Calu3 (cell line): ENCODE measurements at regions of chr11 and their contacts with region 1.

Region 1: DNA sequence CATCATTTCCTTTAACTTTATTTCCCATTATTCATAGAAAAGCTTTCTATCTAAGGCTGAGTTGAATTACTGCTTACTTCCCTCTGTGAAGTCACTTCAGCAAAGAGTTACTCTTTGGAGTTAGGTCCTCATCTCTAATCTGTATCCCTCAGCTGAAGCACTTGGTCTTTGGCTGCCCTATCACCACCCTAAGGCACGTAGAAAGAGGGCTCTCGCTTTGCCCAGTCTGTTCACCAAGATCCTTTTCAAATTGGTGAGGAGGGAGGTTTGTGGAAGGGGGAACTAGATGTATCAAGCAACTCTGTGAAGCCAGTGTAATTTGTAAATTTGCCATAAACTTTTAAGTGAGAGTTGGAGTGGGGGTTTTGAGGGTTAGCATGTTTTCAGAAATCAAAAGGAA is 43.4 kb downstream of the PAX6 start:
- DNase-seq: no peak
- H3K4me3 Mint-ChIP-seq: no peak overlapping the region
- H3K27ac Mint-ChIP-seq: no peak overlapping the region
- H3K4me1 Mint-ChIP-seq: no peaks in the 10 kb centered on the region
- H3K27me3 Mint-ChIP-seq: no peaks in the 10 kb centered on the region
- CTCF ChIP-seq: no peak

Region 2: GRCh38 chr11:31464436-31464835 is 303.2 kb before region 1 on chr11:
- CTCF ChIA-PET with region 1: no interaction called
- intact Hi-C with region 1: no loop called
- DNase-seq: no peak
- H3K4me3 Mint-ChIP-seq: no peak overlapping the region
- H3K27ac Mint-ChIP-seq: no peak overlapping the region
- H3K4me1 Mint-ChIP-seq: no peaks in the 10 kb centered on the region
- H3K27me3 Mint-ChIP-seq: no peaks in the 10 kb centered on the region
- CTCF ChIP-seq: no peak

Region 3: DNA sequence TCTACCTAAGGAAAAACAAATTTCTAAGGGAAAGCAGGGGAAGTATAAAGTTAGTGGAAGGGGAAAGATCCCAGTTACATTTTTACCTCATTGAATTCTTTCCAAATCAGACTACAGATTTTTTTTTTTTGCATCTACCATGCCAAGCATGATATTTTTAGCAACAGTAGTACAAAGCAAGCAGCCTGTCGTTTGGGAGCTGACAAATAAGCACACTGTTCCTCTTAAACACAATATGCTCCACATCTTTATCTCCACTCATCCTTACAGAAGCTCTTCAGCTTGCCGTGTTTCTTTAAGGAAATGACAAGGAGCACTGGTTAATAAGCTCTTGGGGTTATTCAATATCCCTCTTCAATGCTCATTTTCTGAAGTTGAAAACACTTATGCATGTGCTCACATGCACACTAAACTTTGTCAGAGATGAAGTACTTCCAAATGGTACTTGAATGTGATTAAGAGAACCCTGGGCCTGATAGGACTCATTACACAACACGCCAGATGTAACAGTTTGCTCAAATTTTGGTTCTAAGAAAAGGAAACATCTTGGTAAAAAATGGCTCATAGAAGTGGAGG is 10.3 kb before region 1 on chr11:
- CTCF ChIA-PET with region 1: interaction called, 10 read pairs
- intact Hi-C with region 1: no loop called
- DNase-seq: no peak
- H3K4me3 Mint-ChIP-seq: no peak overlapping the region
- H3K27ac Mint-ChIP-seq: no peak overlapping the region
- H3K4me1 Mint-ChIP-seq: no peaks in the 10 kb centered on the region
- H3K27me3 Mint-ChIP-seq: no peaks in the 10 kb centered on the region
- CTCF ChIP-seq: no peak

Region 4: DNA sequence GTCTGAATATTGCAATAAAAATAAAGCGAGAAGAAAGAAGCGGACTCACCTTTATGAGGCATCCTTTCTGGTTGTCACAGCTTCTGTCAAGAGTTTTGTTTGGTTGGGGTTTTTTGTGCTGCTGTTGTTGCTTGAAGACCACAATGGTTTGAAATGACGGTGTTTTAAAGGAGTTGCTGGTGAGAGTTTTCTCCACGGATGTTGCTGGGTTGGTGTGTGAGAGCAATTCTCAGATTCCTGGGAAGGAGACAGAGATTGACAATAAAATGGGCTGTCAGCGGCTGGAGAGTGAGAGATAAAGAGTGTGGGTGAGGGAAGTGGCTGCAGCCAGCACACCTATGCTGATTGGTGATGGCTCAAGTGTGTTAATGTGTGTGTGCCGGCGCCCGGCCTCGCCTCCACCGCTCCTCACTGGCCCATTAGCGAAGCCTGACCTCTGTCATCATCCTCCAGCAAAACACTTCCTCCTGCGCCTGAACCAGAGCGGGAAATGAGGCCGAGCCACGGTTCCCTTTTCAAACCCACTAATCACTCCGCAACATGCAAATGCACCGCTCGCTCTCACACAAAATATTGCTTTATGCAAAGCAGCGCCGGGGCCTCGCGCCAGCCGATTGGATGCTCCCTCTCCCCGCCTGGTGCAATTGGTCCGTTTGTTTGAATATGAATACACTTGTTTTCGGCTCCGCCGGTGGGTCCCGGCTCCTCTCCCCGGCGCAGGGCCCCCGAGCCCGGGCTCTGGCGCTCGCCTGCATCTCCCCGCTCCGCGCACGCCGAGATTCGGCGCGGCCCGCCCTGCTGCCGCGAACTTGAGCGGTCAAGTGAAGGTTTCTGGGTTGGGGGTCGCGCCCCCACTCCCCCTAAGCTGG is 43.3 kb after region 1 on chr11 and contains the start of gene PAX6:
- CTCF ChIA-PET with region 1: no interaction called
- intact Hi-C with region 1: no loop called
- DNase-seq: peak; percentile 49
- H3K4me3 Mint-ChIP-seq: peak within 1 kb of the TSS; percentile 82
- H3K27ac Mint-ChIP-seq: peak within 1 kb of the TSS; percentile 63
- H3K4me1 Mint-ChIP-seq: peaks cover 35% of the 10 kb centered on the region
- H3K27me3 Mint-ChIP-seq: peaks cover 91% of the 10 kb centered on the region
- CTCF ChIP-seq: no peak
- total RNA-seq, gene PAX6: 0.24 and 0.87 TPM in 2 replicates

Region 5: GRCh38 chr11:31887180-31887579 is 119.5 kb after region 1 on chr11:
- CTCF ChIA-PET with region 1: no interaction called
- intact Hi-C with region 1: no loop called
- DNase-seq: no peak
- H3K4me3 Mint-ChIP-seq: no peak overlapping the region
- H3K27ac Mint-ChIP-seq: no peak overlapping the region
- H3K4me1 Mint-ChIP-seq: no peaks in the 10 kb centered on the region
- H3K27me3 Mint-ChIP-seq: peaks cover 70% of the 10 kb centered on the region
- CTCF ChIP-seq: no peak